HAP-1 (cell line): ENCODE measurements at regions of chr11 and their contacts with region 1.

Region 1: GRCh38 chr11:88543902-88544655 is 206.5 kb upstream of the CTSC start:
- DNase-seq: peak; percentile 56 to 75
- H3K4me3 ChIP-seq: no peak overlapping the region
- H3K4me1 ChIP-seq: no peaks in the 10 kb centered on the region
- H3K27me3 ChIP-seq: 0 out of 2 replicates have a peak, but pooled peaks cover 4% of the 10 kb centered on the region

Region 2: DNA sequence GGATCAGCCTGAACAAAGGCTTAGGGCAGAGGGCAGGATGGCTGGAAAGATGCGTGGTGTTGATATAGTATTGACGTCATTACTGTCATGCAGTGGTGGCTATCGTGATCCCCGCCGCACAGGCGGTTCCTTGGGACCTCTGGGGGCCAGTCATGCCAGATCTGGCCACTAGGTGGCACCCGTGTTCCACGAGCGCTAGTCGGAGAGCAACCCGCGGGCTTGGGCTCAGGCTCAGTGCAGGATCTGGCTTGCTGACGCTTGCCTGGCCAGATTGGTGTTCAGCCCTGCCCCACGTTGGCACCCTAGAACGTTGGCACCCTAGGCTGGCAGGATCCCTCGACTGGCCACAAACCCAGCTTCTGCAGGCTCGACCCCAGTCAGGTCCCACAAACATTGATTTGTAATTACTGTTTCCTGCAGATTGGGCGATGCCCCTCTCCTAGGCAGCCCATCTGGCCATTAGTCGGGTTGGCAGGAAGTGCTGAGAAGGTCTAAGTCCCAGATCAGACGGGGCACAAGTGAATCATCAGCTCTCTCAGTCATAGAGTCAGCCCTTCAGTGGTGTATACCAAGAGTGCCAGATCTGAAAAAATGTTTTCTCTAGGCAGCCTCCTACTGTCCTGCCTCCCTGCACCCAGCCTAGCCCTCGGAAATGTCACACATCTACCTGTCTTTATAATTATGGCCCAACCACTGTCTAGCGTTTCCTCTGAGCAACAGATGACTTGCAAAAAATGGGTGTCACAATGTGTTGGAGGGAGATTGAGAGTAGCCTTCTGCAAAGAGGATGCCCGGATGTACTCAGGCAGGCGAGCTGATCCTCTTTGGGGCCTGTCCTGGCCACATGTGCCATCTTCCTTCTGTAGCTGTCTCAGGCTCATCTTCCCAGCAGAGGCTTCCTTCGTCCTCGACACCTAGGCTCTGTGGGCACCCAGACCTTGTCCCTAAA is 1191.0 kb before region 1 on chr11:
- in situ Hi-C with region 1: loop called (anchors 10 kb)
- DNase-seq: peak; percentile 59 to 92
- H3K4me3 ChIP-seq: no peak overlapping the region
- H3K4me1 ChIP-seq: no peaks in the 10 kb centered on the region; the same call in 1 of the 2 replicates
- H3K27me3 ChIP-seq: no peaks in the 10 kb centered on the region

Region 3: GRCh38 chr11:87901341-87901740 is 642.7 kb before region 1 on chr11:
- in situ Hi-C with region 1: no loop called
- DNase-seq: no peak
- H3K4me3 ChIP-seq: no peak overlapping the region
- H3K4me1 ChIP-seq: no peaks in the 10 kb centered on the region
- H3K27me3 ChIP-seq: 0 out of 2 replicates have a peak, but pooled peaks cover 3% of the 10 kb centered on the region

Region 4: GRCh38 chr11:88016392-88017170 is 527.5 kb before region 1 on chr11:
- in situ Hi-C with region 1: loop called (anchors 25 kb)
- DNase-seq: peak; percentile 54 to 78
- H3K4me3 ChIP-seq: no peak overlapping the region
- H3K4me1 ChIP-seq: no peaks in the 10 kb centered on the region
- H3K27me3 ChIP-seq: no peaks in the 10 kb centered on the region